Mammary epithelial cell (primary cell): ENCODE measurements at regions of chr7 and their contacts with region 1.

Region 1: GRCh38 chr7:33671531-33672262 is 233.6 kb upstream of the BMPER start:
- DNase-seq: no peak
- H3K4me3 ChIP-seq: no peak overlapping the region
- H3K27ac ChIP-seq: no peak overlapping the region
- H3K4me1 ChIP-seq: peaks cover 10% of the 10 kb centered on the region
- H3K27me3 ChIP-seq: no peaks in the 10 kb centered on the region
- CTCF ChIP-seq: no peak

Region 2: DNA sequence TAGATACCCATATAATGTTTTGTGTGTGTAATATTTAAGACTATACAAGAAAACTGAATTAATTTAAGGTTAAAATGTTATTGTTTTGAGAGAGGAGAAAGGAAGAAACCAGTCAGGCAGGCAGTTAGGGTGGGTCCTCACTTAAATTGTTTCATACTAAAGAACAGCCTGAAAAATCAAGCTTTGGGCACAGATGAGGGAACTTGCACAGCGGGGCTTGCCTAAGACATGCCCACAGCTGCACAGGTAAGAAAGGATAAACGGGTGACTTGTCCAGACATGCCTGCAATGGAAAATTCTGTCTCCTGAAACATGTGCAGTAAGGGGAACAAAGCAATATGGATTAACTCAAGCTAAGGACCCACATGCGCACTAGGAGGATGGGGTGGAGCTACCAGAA is 383.9 kb before region 1 on chr7:
- CTCF ChIA-PET with region 1: no interaction called
- dilution Hi-C with region 1: no loop called
- in situ Hi-C with region 1: no loop called
- intact Hi-C with region 1: no loop called
- DNase-seq: peak; percentile 75
- H3K4me3 ChIP-seq: no peak overlapping the region
- H3K27ac ChIP-seq: peak overlapping the region; percentile 75
- H3K4me1 ChIP-seq: peaks cover 7% of the 10 kb centered on the region
- H3K27me3 ChIP-seq: no peaks in the 10 kb centered on the region
- CTCF ChIP-seq: no peak

Region 3: GRCh38 chr7:33554046-33554445 is 117.7 kb before region 1 on chr7:
- CTCF ChIA-PET with region 1: no interaction called
- dilution Hi-C with region 1: no loop called
- in situ Hi-C with region 1: no loop called
- intact Hi-C with region 1: no loop called
- DNase-seq: no peak
- H3K4me3 ChIP-seq: no peak overlapping the region
- H3K27ac ChIP-seq: no peak overlapping the region
- H3K4me1 ChIP-seq: no peaks in the 10 kb centered on the region
- H3K27me3 ChIP-seq: no peaks in the 10 kb centered on the region
- CTCF ChIP-seq: no peak

Region 4: DNA sequence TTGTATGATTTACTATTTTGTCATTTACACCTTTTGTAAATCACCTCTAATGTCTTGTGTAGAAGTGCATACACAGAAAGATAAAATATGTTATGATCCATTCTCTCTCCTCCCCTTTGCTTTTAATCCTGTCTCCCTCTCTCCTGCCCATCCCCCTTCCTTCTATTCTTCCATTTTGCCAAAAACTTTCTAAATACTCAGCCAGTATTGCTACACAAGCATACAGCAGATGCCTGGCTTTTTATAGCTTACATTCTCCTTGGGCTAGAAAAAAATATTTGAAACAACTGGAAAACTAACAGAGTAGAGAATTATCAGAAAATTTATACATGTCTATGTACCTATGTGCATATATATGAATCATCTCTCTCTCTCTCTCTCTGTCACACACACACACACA is 75.0 kb before region 1 on chr7:
- CTCF ChIA-PET with region 1: no interaction called
- dilution Hi-C with region 1: loop called (anchors 5 kb)
- in situ Hi-C with region 1: no loop called
- intact Hi-C with region 1: no loop called
- DNase-seq: no peak
- H3K4me3 ChIP-seq: no peak overlapping the region
- H3K27ac ChIP-seq: no peak overlapping the region
- H3K4me1 ChIP-seq: peaks cover 3% of the 10 kb centered on the region
- H3K27me3 ChIP-seq: no peaks in the 10 kb centered on the region
- CTCF ChIP-seq: no peak